HAP-1 (cell line): ENCODE measurements at regions of chr10 and their contacts with region 1.

Region 1: GRCh38 chr10:74262856-74263255 is 111.8 kb downstream of the ADK start:
- DNase-seq: no peak
- H3K4me3 ChIP-seq: no peak overlapping the region
- H3K4me1 ChIP-seq: no peaks in the 10 kb centered on the region
- H3K27me3 ChIP-seq: no peaks in the 10 kb centered on the region

Region 2: GRCh38 chr10:74384615-74385183 is 121.8 kb after region 1 on chr10:
- in situ Hi-C with region 1: no loop called
- DNase-seq: peak in 1 of 2 experiments; percentile 36
- H3K4me3 ChIP-seq: no peak overlapping the region
- H3K4me1 ChIP-seq: peaks cover 3% of the 10 kb centered on the region; the same call in 1 of the 2 replicates
- H3K27me3 ChIP-seq: no peaks in the 10 kb centered on the region

Region 3: GRCh38 chr10:75029857-75030256 is 767.0 kb after region 1 on chr10:
- in situ Hi-C with region 1: loop called (anchors 10 kb)
- DNase-seq: no peak
- H3K4me3 ChIP-seq: no peak overlapping the region
- H3K4me1 ChIP-seq: no peaks in the 10 kb centered on the region
- H3K27me3 ChIP-seq: no peaks in the 10 kb centered on the region

Region 4: DNA sequence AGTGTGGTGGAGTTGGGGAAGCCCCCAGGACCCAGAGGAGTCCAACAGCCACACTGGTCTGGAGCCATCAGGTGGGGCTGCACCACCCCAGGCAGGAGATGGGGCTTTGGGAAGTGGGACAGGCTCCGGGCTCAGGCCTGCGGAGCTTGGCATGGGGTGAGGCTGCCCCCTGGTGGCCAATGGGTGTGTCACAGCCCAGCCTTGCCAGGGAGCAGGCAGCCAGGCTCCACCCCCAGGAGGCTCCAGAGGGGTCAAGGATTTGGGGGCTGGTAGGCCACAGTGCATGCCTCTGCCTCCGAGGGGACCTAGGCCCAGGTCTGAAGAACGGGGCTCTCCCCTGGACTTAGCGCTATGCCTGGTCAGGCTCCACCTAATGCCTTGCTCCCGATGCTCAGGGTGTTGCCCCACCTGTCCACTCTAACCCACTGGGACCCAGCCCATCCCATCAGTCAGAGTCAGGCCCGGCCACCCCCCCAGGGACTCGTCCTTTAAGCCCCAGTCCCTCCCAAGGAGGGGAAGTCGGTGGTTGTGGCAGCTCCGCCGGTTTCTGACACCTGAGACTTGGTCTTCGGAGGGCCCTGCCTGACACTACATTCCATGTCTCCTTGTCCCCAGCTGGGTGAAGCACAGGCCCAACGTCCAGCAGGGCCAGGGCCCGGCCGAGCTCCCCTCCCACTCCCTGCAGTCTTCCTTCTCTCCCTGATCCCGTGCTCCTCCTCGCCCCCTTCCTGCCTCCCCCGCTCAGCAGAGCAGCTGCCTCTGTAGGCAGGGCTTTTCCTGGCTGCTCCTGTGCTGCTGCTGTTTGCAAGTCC is 837.3 kb after region 1 on chr10:
- in situ Hi-C with region 1: loop called (anchors 5 kb)
- DNase-seq: peak; percentile 59 to 90
- H3K4me3 ChIP-seq: no peak overlapping the region
- H3K4me1 ChIP-seq: no peaks in the 10 kb centered on the region
- H3K27me3 ChIP-seq: no peaks in the 10 kb centered on the region

Region 5: GRCh38 chr10:75235375-75236177 is 972.7 kb after region 1 on chr10 and contains the start of gene COMTD1:
- in situ Hi-C with region 1: loop called (anchors 10 kb)
- DNase-seq: peak; percentile 93 to 97
- H3K4me3 ChIP-seq: peak within 1 kb of the TSS; percentile 63
- H3K4me1 ChIP-seq: peaks cover 10% of the 10 kb centered on the region
- H3K27me3 ChIP-seq: no peaks in the 10 kb centered on the region